Activated CD8-positive, alpha-beta T cell treated with anti-CD3 and anti-CD28 coated beads for 36 hours (primary cell): ENCODE measurements at regions of chr2 and their contacts with region 1.

Region 1: GRCh38 chr2:130797493-130798435 is 39.0 kb upstream of the ARHGEF4 start:
- DNase-seq: peak; percentile 94
- ATAC-seq: peak; percentile 96
- H3K4me3 Mint-ChIP-seq: peak overlapping the region; percentile 63
- H3K27ac Mint-ChIP-seq: peak overlapping the region; percentile 42
- H3K4me1 Mint-ChIP-seq: peaks cover 3% of the 10 kb centered on the region
- H3K27me3 Mint-ChIP-seq: peaks cover 3% of the 10 kb centered on the region
- CTCF ChIP-seq: peak; percentile 78

Region 2: GRCh38 chr2:130813722-130814121 is 16.0 kb after region 1 on chr2:
- CTCF ChIA-PET with region 1: interaction called, 31 read pairs
- POLR2A ChIA-PET with region 1: no interaction called
- intact Hi-C with region 1: no loop called
- DNase-seq: no peak
- ATAC-seq: no peak
- H3K4me3 Mint-ChIP-seq: no peak overlapping the region
- H3K27ac Mint-ChIP-seq: no peak overlapping the region
- H3K4me1 Mint-ChIP-seq: no peaks in the 10 kb centered on the region
- H3K27me3 Mint-ChIP-seq: peaks cover 14% of the 10 kb centered on the region
- CTCF ChIP-seq: no peak

Region 3: GRCh38 chr2:130845510-130846085 is 47.8 kb after region 1 on chr2:
- CTCF ChIA-PET with region 1: interaction called, 21 read pairs
- POLR2A ChIA-PET with region 1: no interaction called
- intact Hi-C with region 1: no loop called
- DNase-seq: no peak
- ATAC-seq: no peak
- H3K4me3 Mint-ChIP-seq: no peak overlapping the region
- H3K27ac Mint-ChIP-seq: no peak overlapping the region
- H3K4me1 Mint-ChIP-seq: no peaks in the 10 kb centered on the region
- H3K27me3 Mint-ChIP-seq: peaks cover 2% of the 10 kb centered on the region
- CTCF ChIP-seq: no peak

Region 4: DNA sequence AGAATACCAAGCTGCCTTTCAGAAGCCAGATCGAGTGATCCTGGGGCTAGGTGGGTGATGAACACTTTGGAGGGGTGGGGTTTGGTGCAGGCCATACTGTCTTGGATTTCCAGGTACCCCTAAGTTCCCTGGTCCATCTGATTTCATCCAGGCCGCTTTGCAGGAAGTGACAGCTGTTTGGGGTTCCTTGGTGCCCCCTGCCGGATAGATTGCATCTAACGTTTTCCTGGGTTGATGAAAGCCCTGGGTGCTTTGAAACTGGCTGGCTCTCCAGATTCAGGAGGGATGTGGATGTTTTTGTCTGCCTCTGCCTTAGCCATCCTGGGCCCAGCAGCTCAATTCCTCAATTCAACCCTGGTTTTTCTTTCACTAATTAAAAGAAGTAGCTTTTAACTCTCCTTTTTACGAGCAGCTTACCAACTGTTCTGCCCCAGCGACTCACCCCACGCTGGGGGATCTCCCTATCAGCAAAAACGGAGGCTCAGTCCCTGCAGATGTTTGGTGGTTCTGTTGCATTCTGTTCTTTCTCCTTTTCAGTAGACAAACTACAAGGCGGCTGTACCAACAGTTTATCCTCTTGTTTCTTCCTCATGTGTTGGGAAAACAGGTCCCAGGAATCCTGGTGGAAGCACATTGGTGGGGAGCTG is 76.1 kb after region 1 on chr2:
- CTCF ChIA-PET with region 1: interaction called, 241 read pairs
- POLR2A ChIA-PET with region 1: interaction called, 6 read pairs
- intact Hi-C with region 1: loop called (anchors 1 kb)
- DNase-seq: peak; percentile 87
- ATAC-seq: peak; percentile 90
- H3K4me3 Mint-ChIP-seq: no peak overlapping the region
- H3K27ac Mint-ChIP-seq: no peak overlapping the region
- H3K4me1 Mint-ChIP-seq: peaks cover 2% of the 10 kb centered on the region
- H3K27me3 Mint-ChIP-seq: peaks cover 9% of the 10 kb centered on the region
- CTCF ChIP-seq: peak; percentile 68

Region 5: DNA sequence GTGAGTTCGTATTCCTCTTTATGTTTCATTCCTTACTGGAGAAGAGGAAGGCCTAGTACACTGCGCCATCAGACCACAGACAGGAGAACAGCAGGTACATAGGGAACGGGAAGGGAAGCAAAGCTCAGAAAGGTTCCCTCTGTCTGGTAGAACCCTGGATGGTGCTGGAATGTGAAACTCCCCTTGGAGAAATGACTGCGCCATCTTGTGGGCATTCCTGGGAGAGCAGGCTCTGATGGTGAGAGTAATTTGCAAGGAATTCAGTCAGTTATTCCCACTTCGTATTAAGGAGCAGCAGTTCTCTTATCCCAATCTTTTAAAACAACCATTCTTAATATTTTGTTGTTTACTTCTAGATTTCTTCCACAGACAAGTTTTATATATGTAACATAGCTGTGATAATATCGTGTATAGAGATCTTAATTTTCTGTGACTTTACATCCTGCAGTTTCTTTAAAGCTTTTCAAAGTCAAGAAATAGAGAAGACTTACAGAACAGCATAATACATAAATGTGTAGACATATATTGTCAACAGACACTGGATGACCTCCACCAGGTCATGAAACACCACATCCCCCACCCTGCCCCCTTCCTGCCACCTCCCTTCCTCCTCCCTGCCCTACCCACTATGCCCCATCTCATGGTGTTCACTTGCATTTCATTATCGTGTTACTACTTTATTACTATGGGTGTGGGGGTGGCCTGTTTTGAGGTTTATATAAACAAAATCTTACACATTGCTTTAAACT is 122.8 kb after region 1 on chr2:
- CTCF ChIA-PET with region 1: interaction called, 14 read pairs
- POLR2A ChIA-PET with region 1: interaction called, 4 read pairs
- intact Hi-C with region 1: loop called (anchors 2 kb)
- DNase-seq: peak; percentile 71
- ATAC-seq: peak; percentile 53
- H3K4me3 Mint-ChIP-seq: no peak overlapping the region
- H3K27ac Mint-ChIP-seq: no peak overlapping the region
- H3K4me1 Mint-ChIP-seq: no peaks in the 10 kb centered on the region
- H3K27me3 Mint-ChIP-seq: peaks cover 7% of the 10 kb centered on the region
- CTCF ChIP-seq: peak; percentile 95

Region 6: DNA sequence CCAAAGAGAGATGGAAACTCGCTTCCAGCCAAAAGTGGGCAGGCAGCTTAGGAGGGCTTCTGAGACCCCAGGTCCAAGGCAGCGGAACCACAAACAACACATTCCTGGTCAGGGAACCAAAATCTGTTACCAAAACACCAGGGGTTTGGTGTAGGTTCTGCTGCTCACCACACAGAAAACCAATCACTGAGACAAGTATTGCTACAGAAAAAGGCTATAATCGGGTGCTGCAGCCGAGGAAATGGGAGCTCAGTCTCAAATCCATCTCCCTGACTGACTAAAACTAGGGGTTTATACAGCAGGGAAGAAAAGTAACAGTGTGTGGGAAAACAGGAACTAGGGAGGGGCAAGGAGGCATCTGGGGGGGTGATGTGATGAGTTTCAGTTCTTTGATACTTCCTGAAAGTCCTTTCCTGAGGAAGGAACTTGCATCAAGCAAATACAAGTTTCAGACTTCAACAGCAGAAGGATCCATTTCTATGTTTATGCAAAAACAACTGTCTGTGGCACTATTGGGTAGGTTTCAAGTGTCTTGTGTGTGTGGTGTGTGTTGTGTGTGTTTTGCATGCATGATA is 187.5 kb after region 1 on chr2:
- CTCF ChIA-PET with region 1: no interaction called
- POLR2A ChIA-PET with region 1: no interaction called
- intact Hi-C with region 1: no loop called
- DNase-seq: no peak
- ATAC-seq: no peak
- H3K4me3 Mint-ChIP-seq: no peak overlapping the region
- H3K27ac Mint-ChIP-seq: no peak overlapping the region
- H3K4me1 Mint-ChIP-seq: peaks cover 6% of the 10 kb centered on the region
- H3K27me3 Mint-ChIP-seq: no peaks in the 10 kb centered on the region
- CTCF ChIP-seq: no peak